HEK293 (cell line): ENCODE measurements at regions of chr1 and their contacts with region 1.

Region 1: GRCh38 chr1:47997289-47998200 is at the start of gene TRABD2B:
- H3K4me3 ChIP-seq: peak within 1 kb of the TSS; percentile 53
- H3K27ac ChIP-seq: peak within 1 kb of the TSS; percentile 81; the same call in 1 of the 2 replicates
- H3K4me1 ChIP-seq: peaks cover 11% of the 10 kb centered on the region
- CTCF ChIP-seq: peak; percentile 98

Region 2: DNA sequence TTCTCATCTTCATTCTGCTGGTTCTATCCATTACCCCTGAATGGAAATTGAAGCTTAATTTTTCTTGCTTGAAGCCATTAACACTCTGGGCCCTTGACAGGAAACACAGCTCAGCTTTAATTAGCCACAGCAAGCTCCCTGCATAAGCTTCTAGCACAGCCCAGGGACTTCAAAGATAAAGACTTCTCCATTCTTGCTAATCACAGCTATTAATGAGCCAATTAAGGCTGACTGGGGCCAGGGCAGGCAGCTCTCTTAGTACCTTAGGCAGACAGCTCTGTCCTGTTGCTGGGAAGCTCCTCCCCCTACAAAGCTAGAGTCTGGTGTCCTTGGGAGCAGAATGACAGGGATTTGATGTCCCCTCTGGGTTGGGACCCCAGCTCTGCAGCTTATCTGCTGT is 27.5 kb after region 1 on chr1:
- CTCF ChIA-PET with region 1: interaction called, 15 read pairs
- POLR2A ChIA-PET with region 1: no interaction called
- H3K4me3 ChIP-seq: no peak overlapping the region
- H3K27ac ChIP-seq: no peak overlapping the region
- H3K4me1 ChIP-seq: no peaks in the 10 kb centered on the region
- CTCF ChIP-seq: no peak

Region 3: GRCh38 chr1:48048064-48048463 is 50.5 kb after region 1 on chr1:
- CTCF ChIA-PET with region 1: interaction called, 25 read pairs
- POLR2A ChIA-PET with region 1: interaction called, 5 read pairs
- H3K4me3 ChIP-seq: no peak overlapping the region
- H3K27ac ChIP-seq: no peak overlapping the region
- H3K4me1 ChIP-seq: peaks cover 15% of the 10 kb centered on the region
- CTCF ChIP-seq: no peak

Region 4: DNA sequence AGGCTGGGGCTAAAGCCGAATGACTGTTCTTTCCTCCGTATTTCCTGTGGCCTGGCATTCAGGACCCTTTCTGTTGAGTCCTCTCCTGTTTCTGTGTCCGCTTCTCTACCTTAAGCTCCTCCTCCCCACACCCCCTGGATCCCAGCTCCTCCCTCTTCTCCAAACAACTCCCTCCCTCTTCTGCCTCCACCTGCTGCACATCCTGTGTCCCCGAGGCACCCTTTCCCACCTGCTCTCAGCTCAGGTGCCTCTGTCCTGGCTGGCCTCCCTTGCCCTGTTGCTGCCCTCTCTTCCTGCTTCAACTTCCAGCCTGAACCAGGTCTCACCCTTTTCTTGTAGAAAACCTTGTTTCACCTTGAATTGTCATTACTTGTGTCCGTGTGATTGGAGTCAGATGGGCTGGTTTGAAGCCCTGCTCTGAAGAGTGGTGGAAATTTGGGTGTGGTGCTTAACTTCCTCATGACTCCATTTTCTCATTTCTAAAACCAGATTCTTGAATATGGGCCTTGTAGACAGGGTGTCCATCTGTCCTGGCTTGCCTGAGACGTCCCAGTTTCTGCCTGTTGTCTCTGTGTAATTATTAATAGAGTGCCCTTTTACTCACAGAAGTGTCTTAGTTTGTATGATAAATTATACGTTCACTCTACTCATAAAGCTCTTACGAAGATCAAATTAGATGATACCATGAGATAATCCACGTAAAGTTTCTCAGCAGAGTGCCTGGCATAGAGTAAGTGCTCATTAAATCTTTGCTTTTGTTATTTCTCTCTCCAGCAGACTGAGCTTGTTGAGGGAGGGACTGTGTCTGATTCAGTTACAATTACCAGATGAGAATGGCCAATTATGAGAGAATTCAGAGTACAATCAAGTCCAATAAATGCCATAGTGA is 58.6 kb after region 1 on chr1:
- CTCF ChIA-PET with region 1: interaction called, 151 read pairs
- POLR2A ChIA-PET with region 1: no interaction called
- H3K4me3 ChIP-seq: no peak overlapping the region
- H3K27ac ChIP-seq: no peak overlapping the region
- H3K4me1 ChIP-seq: peaks cover 13% of the 10 kb centered on the region
- CTCF ChIP-seq: no peak

Region 5: GRCh38 chr1:48069662-48070432 is 72.3 kb after region 1 on chr1:
- CTCF ChIA-PET with region 1: interaction called, 151 read pairs
- POLR2A ChIA-PET with region 1: no interaction called
- H3K4me3 ChIP-seq: no peak overlapping the region
- H3K27ac ChIP-seq: no peak overlapping the region
- H3K4me1 ChIP-seq: peaks cover 3% of the 10 kb centered on the region; the same call in 1 of the 2 replicates
- CTCF ChIP-seq: no peak